Sigmoid colon (tissue), 7 donors: ENCODE measurements at regions of chr18 and their contacts with region 1.

Region 1: DNA sequence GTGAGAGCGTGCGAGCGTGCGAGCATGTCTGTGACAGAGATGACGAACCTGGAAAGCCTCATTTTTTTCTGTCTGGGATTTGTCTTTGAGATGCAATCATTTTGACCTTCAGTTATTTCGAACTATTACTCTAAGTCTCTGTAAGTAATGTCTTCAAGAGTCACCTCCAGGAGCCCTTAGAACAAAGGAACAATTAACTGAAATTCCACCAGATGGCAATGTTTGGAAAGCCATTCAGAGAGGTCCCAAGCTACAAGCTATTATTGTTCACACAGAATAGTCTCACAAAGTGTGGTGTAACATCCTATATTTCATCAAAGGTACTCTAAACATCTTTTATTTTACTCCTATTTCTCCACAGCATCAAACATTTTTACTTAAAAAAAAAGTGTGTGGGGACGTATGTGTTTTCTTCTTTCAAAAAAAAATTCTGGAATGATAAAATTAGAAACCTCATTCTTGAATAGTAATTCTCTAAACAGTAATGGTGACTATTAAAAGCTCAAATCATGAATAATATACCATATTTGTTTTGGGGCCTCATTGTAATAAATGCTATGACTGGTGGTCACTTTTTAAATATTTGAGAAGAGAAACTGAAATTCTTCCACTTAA is 35.1 kb upstream of the MAPRE2 start:
- DNase-seq: no peak
- H3K4me3 ChIP-seq: no peak overlapping the region
- H3K27ac ChIP-seq: no peak overlapping the region
- H3K4me1 ChIP-seq: no peaks in the 10 kb centered on the region
- H3K27me3 ChIP-seq: no peaks in the 10 kb centered on the region
- CTCF ChIP-seq: peak; percentile 50 to 68 (median 62)
- EP300 ChIP-seq: no peak
- POLR2A ChIP-seq: no peak

Region 2: GRCh38 chr18:33844232-33844631 is 1161.8 kb before region 1 on chr18:
- intact Hi-C with region 1: no loop called
- DNase-seq: no peak
- H3K4me3 ChIP-seq: no peak overlapping the region
- H3K27ac ChIP-seq: no peak overlapping the region
- H3K4me1 ChIP-seq: peaks cover 0 to 10% (median 8%) of the 10 kb centered on the region in 4 donors
- H3K27me3 ChIP-seq: no peaks in the 10 kb centered on the region
- CTCF ChIP-seq: no peak
- EP300 ChIP-seq: no peak
- POLR2A ChIP-seq: no peak

Region 3: DNA sequence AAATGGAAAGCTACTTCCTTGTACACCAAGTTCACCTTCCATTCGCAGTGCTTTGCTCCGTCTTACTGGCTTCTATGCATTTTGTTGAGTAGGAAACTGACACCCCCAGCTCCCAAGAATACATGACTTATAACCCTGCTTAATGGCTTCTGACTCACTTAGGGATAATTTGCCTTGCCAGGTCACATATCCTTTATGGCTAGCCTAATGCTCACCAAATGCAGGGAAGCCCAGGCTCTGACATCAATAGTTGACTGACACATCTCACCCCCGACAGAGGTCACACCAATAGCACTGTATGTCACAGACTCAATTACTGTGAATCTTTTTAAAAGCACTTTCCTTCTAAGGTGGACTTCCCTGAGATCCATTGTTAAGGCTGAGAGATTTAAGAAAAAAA is 148.8 kb before region 1 on chr18:
- intact Hi-C with region 1: no loop called
- DNase-seq: no peak
- H3K4me3 ChIP-seq: no peak overlapping the region
- H3K27ac ChIP-seq: no peak overlapping the region
- H3K4me1 ChIP-seq: no peaks in the 10 kb centered on the region
- H3K27me3 ChIP-seq: no peaks in the 10 kb centered on the region
- CTCF ChIP-seq: no peak
- EP300 ChIP-seq: no peak
- POLR2A ChIP-seq: no peak

Region 4: GRCh38 chr18:35143622-35144596 is 137.8 kb after region 1 on chr18:
- intact Hi-C with region 1: loop called (anchors 1 kb)
- DNase-seq: peak; percentile 78
- H3K4me3 ChIP-seq: no peak overlapping the region
- H3K27ac ChIP-seq: peak overlapping the region in 2 of 4 donors; percentile 18 to 28
- H3K4me1 ChIP-seq: peaks cover 0 to 11% (median 7%) of the 10 kb centered on the region in 4 donors
- H3K27me3 ChIP-seq: no peaks in the 10 kb centered on the region
- CTCF ChIP-seq: peak; percentile 40 to 81 (median 70)
- EP300 ChIP-seq: no peak
- POLR2A ChIP-seq: no peak

Region 5: DNA sequence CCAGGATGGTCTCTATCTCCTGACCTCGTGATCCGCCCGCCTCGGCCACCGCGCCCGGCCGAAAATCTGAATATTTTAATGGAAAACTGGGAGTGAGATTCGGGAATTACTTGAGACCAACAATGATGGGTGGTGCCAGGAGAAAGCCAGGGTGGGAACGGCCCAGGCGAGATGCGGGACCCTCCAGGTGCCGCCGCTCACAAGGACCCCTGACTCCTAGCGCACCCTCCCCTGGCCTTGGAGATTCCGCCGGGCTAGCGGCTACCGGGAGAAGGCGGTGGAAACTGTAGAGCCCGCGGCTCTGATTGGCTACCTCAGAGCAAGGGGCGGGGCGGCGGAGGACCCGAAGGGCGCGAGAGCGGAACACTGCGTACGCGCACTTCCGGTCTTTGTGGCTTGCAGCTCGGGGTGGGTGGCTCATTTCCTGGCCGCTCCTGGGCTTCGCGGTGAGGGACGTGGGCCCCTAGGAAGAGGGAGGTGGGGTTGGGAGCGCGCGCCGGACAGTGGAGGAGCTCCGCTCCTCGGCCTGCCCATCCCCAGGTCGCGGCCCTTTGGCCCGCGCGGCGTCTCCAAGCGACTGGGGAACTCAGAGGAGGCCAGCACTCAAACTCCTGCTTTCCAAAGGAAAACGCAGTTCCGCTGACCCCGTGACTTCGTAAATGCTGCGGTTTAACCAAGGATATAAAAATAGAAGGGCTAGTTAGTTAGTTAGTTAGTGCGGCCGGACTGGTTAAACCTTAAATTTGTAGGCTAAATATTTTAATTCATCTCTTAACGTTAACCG is 234.8 kb after region 1 on chr18 and contains the start of gene ZNF397:
- intact Hi-C with region 1: no loop called
- DNase-seq: peak; percentile 99
- H3K4me3 ChIP-seq: peak within 1 kb of the TSS; percentile 67 to 85 (median 78)
- H3K27ac ChIP-seq: peak within 1 kb of the TSS; percentile 96 to 98 (median 98)
- H3K4me1 ChIP-seq: peaks cover 0 to 15% (median 13%) of the 10 kb centered on the region in 4 donors
- H3K27me3 ChIP-seq: no peaks in the 10 kb centered on the region
- CTCF ChIP-seq: no peak
- EP300 ChIP-seq: no peak
- POLR2A ChIP-seq: peak; percentile 93 to 95
- total RNA-seq, gene ZNF397: 25.5 to 33.2 (median 31.5) TPM